Mucosa of descending colon (tissue), 3 donors: ENCODE measurements at regions of chr20 and their contacts with region 1.

Region 1: DNA sequence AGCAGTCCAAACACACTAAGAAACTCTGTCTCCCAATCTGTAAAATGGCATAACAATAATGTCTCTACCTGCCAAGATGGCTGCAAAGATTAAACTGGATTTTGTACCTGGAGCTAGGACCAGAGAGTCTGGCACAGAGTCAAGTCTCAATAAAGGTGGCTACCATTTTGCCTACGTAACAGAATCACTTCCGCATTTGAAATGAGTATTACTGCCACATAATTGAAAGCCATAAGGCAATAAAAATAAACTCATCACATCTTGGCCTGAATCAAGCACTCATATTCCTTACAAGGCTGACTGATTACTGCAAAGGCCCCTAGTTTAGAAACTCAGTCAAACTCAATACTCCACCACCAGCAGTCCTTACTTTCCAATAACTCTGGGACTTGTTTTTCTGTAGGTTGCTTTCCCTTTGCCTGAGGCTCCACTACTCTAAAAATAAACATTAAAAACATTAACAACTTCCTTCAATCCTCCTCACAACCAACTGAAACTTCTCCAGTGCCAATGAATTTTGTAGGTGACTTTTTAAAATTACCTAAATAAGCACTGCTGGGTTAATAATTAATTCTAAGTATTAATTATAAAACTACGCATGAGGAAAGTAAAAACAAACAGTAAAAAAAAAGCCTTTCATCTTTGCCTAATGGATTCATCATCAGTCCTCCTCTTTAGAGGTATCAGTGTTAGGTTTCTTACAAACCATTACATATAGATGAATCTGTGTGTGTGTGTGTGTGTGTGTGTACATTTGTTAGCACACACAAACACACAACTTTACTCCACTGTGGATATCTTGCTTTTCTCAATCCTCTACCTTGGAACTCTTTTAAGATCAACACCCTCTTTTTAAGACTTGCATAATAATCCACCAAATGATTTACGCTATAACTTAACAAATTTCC is 3.7 kb downstream of the KIF16B start:
- DNase-seq: peak in 1 of 3 donors; percentile 81
- ATAC-seq: peak; percentile 58
- H3K4me3 ChIP-seq: no peak overlapping the region
- H3K4me1 ChIP-seq: peaks cover 34% of the 10 kb centered on the region
- CTCF ChIP-seq: no peak

Region 2: DNA sequence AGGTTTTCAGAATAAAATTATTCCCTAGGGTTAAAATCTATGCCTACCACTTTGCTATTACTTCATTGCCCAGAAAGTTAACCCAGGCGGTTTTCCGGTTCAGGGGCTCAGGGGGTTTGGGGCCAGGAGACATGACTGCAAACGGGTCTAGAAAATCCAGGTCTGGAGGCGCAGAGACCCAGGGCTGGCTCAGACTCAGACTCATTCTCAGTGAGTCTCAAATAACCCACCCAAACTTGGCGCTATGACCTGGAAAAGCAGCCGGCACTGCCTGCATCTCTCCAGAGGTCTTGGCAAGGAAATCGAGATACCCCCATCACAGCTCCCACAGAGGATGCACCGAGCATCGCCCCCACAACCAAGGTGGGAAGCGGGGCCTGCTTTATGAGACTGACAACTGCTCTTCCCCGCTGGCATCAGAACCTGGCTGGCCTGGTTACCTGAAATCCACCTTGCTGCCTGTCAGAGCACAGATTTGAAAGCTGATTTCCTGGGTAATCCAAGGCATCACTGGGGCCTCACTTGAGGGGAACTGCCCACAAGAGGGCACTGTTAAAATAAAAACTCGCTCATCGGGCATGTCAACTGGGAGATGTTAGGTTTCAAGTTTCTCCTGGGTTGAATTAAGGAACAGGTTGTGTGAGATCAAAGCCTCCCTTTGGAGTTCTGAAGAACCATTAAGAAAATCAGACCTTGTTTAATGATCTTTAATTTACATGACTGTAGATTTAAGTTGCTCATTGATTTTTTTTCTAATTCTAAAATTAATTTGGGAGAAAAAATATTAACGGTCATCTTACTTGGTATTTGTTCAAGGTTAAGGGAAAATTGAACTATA is 51.3 kb before region 1 on chr20:
- intact Hi-C with region 1: loop called in 1 of 2 experiments (anchors 10 kb)
- DNase-seq: peak in 2 of 3 donors; percentile 50 to 77
- ATAC-seq: peak; percentile 90
- H3K4me3 ChIP-seq: no peak overlapping the region
- H3K4me1 ChIP-seq: no peaks in the 10 kb centered on the region
- CTCF ChIP-seq: no peak